ENCODE measurements at regions of chr14 and their contacts with region 1.

Region 1: DNA sequence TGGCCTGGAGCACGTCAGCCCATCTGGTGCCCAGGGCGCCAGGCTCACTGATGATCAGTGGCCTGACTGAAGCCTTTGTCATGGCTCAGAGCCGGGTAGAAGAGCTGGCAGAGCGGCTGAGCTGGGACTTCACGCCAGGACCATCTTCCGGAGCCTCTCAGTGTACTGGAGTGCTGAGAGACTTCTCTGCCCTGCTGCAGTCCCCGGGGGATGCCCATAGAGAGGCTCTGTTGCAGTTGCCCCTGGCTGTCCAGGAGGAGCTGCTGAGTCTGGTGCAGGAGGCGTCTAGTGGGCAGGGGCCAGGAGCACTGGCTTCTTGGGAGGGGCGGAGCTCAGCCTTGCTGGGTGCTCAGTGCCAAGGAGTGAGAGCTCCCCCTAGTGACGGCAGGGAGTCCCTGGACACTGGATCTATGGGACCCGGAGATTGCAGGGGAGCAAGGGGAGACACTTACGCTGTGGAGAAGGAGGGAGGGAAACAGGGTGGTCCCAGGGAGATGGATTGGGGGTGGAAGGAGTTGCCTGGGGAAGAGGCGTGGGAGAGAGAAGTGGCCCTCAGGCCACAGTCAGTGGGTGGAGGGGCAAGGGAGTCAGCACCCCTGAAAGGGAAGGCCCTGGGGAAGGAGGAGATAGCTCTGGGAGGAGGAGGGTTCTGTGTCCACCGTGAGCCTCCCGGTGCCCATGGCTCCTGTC is 2.0 kb downstream of the KHNYN start:
- DNase-seq: peak; percentile 90
- CTCF ChIP-seq: peak; percentile 96

Region 2: DNA sequence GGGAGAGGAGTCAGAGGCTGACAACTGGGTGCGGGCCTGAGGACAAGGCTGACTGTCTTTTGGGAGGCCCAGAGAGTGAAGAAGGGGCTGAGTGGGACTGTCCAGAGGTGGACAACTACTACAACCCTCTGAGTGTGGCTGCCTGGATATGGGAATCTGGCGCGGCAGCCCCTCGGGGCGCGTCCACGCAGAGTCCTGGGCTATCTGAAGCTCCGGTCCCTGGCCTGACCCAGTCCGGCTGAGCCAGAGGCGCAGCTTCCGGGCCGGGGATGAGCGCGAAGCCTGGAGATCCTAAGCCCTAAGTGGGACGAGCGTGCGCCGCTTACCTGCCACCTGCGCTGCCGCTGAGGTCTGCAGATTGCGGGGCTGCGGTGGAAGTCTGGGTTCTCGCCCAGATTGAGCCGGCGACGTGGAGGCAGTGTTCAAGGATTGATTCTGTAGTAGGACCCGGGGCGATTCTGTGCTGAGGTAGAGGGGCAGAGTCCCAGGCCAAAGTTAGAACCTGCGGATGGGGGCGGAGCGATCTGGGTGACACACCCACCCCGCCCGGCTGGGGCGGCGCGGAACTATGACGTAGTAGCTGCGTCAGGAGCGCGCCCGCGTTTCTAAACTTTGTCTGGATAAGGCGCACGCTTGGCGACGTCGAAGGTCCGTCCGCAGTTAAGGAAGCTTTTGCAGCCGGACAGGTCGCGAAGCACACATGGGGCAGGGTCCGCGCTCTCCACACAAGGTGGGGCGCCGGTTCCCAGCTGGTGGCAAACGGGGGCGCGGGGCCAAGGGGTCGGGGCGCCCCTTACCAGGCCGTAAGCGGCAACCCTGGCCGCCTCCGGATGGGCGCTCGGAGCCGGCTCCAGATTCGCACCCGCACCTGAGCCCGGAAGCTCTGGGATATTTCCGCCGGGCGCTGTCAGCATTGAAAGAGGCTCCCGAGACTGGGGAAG is 132.2 kb before region 1 on chr14 and contains the starts of genes DHRS1 and NOP9:
- CTCF ChIA-PET with region 1: interaction called, 14 read pairs
- POLR2A ChIA-PET with region 1: no interaction called
- DNase-seq: peak; percentile 96
- CTCF ChIP-seq: no peak

Region 3: DNA sequence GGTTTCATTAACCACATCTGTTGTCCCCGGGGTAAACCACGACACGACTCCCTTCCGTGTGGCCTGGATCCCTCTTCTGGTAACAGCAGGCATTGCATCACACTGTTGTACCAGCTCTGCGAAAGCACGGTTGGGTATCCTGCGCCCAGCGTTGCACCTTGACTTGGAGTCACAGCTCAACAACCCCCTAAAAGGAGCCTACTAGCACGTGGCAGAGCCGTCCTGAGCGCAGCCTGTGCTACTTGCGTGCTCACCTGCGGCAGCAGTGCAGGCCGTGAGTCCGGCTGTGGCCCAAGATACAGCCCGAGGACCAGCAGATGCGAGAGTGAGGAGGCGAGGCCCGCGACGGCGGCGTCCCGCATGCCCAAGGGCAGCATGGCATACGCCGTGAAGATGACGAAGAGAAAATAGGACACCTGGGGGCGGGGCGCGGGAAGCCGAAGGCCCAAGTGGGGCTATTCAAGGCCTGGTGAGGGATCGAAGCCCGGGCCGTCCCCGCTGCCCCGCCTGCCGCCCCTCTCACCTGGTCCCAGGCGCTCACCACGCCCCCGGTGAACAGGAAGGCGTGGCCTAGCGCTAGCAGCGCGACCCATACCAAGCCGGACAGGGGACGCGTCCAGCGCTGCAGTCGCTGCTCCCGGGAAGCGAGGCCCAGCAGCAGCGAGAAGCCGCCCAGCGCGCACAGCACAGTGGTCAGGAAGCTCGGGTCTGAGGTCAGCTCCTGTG is 99.3 kb before region 1 on chr14:
- CTCF ChIA-PET with region 1: interaction called, 629 read pairs
- POLR2A ChIA-PET with region 1: interaction called, 10 read pairs
- DNase-seq: peak; percentile 91
- CTCF ChIP-seq: peak; percentile 73

Region 4: GRCh38 chr14:24366721-24367513 is 64.8 kb before region 1 on chr14:
- CTCF ChIA-PET with region 1: interaction called, 53 read pairs
- POLR2A ChIA-PET with region 1: interaction called, 3 read pairs
- DNase-seq: peak; percentile 91
- CTCF ChIP-seq: no peak

Region 5: DNA sequence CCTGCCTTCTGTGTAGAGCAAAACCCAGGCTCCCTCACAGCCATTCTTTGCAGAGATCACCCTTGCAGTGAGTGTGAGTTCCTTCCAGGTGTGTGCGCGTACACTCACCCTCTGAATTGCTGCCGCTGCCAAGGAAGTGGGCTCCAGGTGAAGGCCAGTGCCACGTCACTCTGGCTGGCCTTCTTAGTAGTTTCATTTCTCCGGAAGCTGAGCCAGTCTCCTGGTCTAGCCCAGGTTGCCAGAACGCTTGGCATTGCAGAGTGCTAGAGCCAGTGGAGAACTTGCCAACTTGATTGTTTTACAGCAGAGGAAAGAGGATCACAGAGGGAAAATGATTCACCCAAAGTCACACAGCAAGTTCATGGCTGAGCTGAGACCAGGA is 13.2 kb before region 1 on chr14:
- CTCF ChIA-PET with region 1: interaction called, 41 read pairs
- POLR2A ChIA-PET with region 1: no interaction called
- DNase-seq: no peak
- CTCF ChIP-seq: no peak

Measured in GM10248 (cell line).